ENCODE measurements at regions of chr5 and their contacts with region 1.

Region 1: GRCh38 chr5:140868721-140869554 is at the start of gene PCDHA11:
- DNase-seq: no peak
- H3K4me3 ChIP-seq: peak within 1 kb of the TSS; percentile 54 to 66 (median 58)
- H3K27ac ChIP-seq: peak within 1 kb of the TSS; percentile 37; the same call in 1 of the 2 replicates
- H3K4me1 ChIP-seq: no peaks in the 10 kb centered on the region
- H3K27me3 ChIP-seq: no peaks in the 10 kb centered on the region
- CTCF ChIP-seq: peak; percentile 32 to 68 (median 56)
- EP300 ChIP-seq: no peak
- POLR2A ChIP-seq: peak in 1 of 2 experiments; percentile 46; a peak in 2 of 3 replicates
- RAD21 ChIP-seq: peak; percentile 64 to 72
- total RNA-seq, gene PCDHA11: 6.6 and 6.9 TPM in 2 replicates

Region 2: GRCh38 chr5:140827704-140828361 is 41.1 kb before region 1 on chr5 and contains the start of gene PCDHA6:
- CTCF ChIA-PET with region 1: interaction called, 14 read pairs
- POLR2A ChIA-PET with region 1: interaction called, 4 read pairs
- DNase-seq: no peak
- H3K4me3 ChIP-seq: peak within 1 kb of the TSS in 1 of 4 experiments; percentile 62; a peak in 2 of 8 replicates
- H3K27ac ChIP-seq: no peak within 1 kb of the TSS
- H3K4me1 ChIP-seq: no peaks in the 10 kb centered on the region
- H3K27me3 ChIP-seq: no peaks in the 10 kb centered on the region
- CTCF ChIP-seq: no peak
- EP300 ChIP-seq: no peak
- POLR2A ChIP-seq: no peak
- RAD21 ChIP-seq: no peak
- total RNA-seq, gene PCDHA6: 6.5 and 7.1 TPM in 2 replicates

Region 3: DNA sequence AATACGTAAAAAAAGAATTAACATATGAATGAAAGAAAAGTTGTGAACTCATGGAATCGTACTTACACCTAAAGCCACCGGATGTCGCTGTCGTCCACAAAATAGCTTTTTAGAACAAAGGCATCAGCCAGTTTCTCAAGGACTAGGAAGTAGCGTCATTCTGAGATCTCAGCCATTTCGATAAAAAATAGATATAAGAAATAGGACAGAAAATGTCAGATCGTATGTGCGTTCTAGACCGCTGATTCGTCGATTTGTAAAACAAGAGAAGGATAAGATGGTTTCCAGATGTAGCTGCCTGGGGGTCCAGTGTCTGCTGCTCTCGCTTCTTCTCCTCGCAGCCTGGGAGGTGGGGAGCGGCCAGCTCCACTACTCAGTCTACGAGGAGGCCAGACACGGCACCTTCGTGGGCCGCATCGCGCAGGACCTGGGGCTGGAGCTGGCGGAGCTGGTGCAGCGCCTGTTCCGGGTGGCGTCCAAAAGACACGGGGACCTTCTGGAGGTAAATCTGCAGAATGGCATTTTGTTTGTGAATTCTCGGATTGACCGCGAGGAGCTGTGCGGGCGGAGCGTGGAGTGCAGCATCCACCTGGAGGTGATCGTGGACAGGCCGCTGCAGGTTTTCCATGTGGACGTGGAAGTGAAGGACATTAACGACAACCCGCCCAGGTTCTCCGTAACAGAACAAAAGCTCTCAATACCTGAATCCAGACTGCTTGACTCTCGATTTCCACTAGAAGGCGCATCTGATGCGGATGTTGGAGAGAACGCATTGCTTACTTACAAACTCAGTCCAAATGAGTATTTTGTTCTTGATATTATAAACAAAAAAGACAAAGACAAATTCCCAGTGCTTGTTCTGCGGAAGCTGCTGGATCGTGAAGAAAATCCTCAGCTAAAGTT is 12.9 kb before region 1 on chr5 and contains the start of gene PCDHA10:
- CTCF ChIA-PET with region 1: interaction called, 23 read pairs
- POLR2A ChIA-PET with region 1: interaction called, 9 read pairs
- DNase-seq: no peak
- H3K4me3 ChIP-seq: peak within 1 kb of the TSS; percentile 67 to 83 (median 72)
- H3K27ac ChIP-seq: no peak within 1 kb of the TSS; the same call in 1 of the 2 replicates
- H3K4me1 ChIP-seq: no peaks in the 10 kb centered on the region
- H3K27me3 ChIP-seq: no peaks in the 10 kb centered on the region
- CTCF ChIP-seq: peak in 2 of 3 experiments; percentile 40 to 47; a peak in 3 of 4 replicates
- EP300 ChIP-seq: no peak
- POLR2A ChIP-seq: no peak
- RAD21 ChIP-seq: peak; percentile 45 to 57; a peak in 3 of 4 replicates
- total RNA-seq, gene PCDHA10: 5.4 and 5.5 TPM in 2 replicates

Region 4: GRCh38 chr5:140882591-140882899 is 13.6 kb after region 1 on chr5:
- CTCF ChIA-PET with region 1: interaction called, 25 read pairs
- POLR2A ChIA-PET with region 1: interaction called, 3 read pairs
- DNase-seq: peak in 1 of 2 experiments; percentile 73
- H3K4me3 ChIP-seq: peak overlapping the region; percentile 11 to 60 (median 58); a peak in 6 of 8 replicates
- H3K27ac ChIP-seq: no peak overlapping the region
- H3K4me1 ChIP-seq: no peaks in the 10 kb centered on the region
- H3K27me3 ChIP-seq: no peaks in the 10 kb centered on the region
- CTCF ChIP-seq: peak in 2 of 3 experiments; percentile 70 to 80; a peak in 3 of 4 replicates
- EP300 ChIP-seq: no peak
- POLR2A ChIP-seq: no peak
- RAD21 ChIP-seq: peak; percentile 84 to 89

Region 5: DNA sequence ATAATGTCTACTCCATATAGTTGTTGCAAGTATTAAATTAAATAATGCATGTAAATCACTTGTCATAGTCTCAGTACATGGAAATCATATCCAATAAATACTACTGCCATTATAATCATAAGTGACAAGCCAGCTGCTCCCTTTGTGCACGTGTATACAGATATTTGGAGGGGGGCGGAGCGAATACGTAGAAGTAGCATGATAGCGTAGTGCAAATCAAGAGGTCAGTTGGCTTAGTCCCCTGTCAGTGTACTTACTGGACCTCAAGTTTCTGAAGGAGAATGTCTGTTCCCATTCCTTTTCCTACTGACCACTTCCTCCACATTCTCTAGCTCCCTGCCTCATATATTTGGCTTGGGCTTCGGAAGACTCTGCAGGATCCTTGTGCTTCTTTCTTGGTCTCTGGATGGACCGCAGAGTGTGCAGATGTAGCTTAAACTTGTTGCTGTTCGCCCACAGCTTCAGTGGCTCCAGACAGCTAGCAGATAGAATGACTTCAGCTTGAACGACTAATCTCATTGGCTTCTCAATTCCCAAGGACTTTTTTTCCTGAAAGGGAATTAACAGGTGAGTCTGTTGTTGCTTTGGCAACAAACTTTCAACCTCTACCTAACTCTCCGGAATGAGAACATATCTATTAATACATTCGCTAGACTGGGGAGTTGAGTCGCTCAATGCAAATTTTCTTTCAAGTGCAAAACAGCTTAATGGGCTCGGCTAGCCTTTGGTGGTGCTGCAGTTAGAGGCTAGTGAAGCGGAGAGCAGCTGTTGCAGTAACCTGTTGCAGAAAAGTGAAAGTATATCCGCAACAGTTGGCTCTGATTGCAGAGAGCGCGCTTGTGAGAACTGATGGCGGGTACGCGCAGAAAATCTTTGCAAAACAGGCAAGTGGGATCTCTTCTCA is 181.9 kb after region 1 on chr5 and contains the start of gene PCDHB1:
- CTCF ChIA-PET with region 1: interaction called, 31 read pairs
- POLR2A ChIA-PET with region 1: interaction called, 5 read pairs
- DNase-seq: no peak
- H3K4me3 ChIP-seq: peak within 1 kb of the TSS; percentile 42 to 65 (median 60)
- H3K27ac ChIP-seq: no peak within 1 kb of the TSS
- H3K4me1 ChIP-seq: peaks cover 0 to 9% (median 3%) of the 10 kb centered on the region in 4 experiments; a peak in 5 of 7 replicates
- H3K27me3 ChIP-seq: peaks cover 0 to 14% (median 11%) of the 10 kb centered on the region in 4 experiments; a peak in 6 of 7 replicates
- CTCF ChIP-seq: no peak
- EP300 ChIP-seq: no peak
- POLR2A ChIP-seq: no peak
- RAD21 ChIP-seq: no peak
- total RNA-seq, gene PCDHB1: 0.04 and 0.08 TPM in 2 replicates

Measured in H1 (cell line).